CD8-positive, alpha-beta T cell (primary cell): ENCODE measurements at regions of chr1 and their contacts with region 1.

Region 1: GRCh38 chr1:1906185-1907097 is 8.6 kb upstream of the CALML6 start:
- DNase-seq: peak; percentile 39 to 80 (median 68)
- ATAC-seq: peak; percentile 21
- H3K4me3 ChIP-seq: no peak overlapping the region
- H3K4me3 Mint-ChIP-seq: peak overlapping the region; percentile 54
- H3K27ac ChIP-seq: no peak overlapping the region
- H3K27ac Mint-ChIP-seq: no peak overlapping the region
- H3K4me1 ChIP-seq: peaks cover 10% of the 10 kb centered on the region
- H3K4me1 Mint-ChIP-seq: peaks cover 11% of the 10 kb centered on the region
- H3K27me3 ChIP-seq: peaks cover 0 to 3% of the 10 kb centered on the region in 2 experiments
- H3K27me3 Mint-ChIP-seq: no peaks in the 10 kb centered on the region
- CTCF ChIP-seq: peak; percentile 86

Region 2: GRCh38 chr1:1630271-1630964 is 276.0 kb before region 1 on chr1:
- CTCF ChIA-PET with region 1: no interaction called
- POLR2A ChIA-PET with region 1: interaction called, 4 read pairs
- intact Hi-C with region 1: loop called in 1 of 2 experiments (anchors 5 kb)
- DNase-seq: peak; percentile 89 to 99 (median 93)
- ATAC-seq: peak; percentile 56
- H3K4me3 ChIP-seq: peak overlapping the region; percentile 45 to 53
- H3K4me3 Mint-ChIP-seq: peak overlapping the region; percentile 92
- H3K27ac ChIP-seq: peak overlapping the region; percentile 55 to 79
- H3K27ac Mint-ChIP-seq: peak overlapping the region; percentile 96
- H3K4me1 ChIP-seq: peaks cover 11% of the 10 kb centered on the region
- H3K4me1 Mint-ChIP-seq: peaks cover 10% of the 10 kb centered on the region
- H3K27me3 ChIP-seq: no peaks in the 10 kb centered on the region
- H3K27me3 Mint-ChIP-seq: no peaks in the 10 kb centered on the region
- CTCF ChIP-seq: no peak

Region 3: GRCh38 chr1:1788646-1789431 is 117.6 kb before region 1 on chr1:
- CTCF ChIA-PET with region 1: interaction called, 13 read pairs
- POLR2A ChIA-PET with region 1: no interaction called
- intact Hi-C with region 1: loop called in 1 of 2 experiments (anchors 1 kb)
- DNase-seq: peak in 1 of 9 experiments; percentile 34
- ATAC-seq: no peak
- H3K4me3 ChIP-seq: no peak overlapping the region
- H3K4me3 Mint-ChIP-seq: no peak overlapping the region
- H3K27ac ChIP-seq: no peak overlapping the region
- H3K27ac Mint-ChIP-seq: peak overlapping the region; percentile 55
- H3K4me1 ChIP-seq: no peaks in the 10 kb centered on the region
- H3K4me1 Mint-ChIP-seq: no peaks in the 10 kb centered on the region
- H3K27me3 ChIP-seq: no peaks in the 10 kb centered on the region
- H3K27me3 Mint-ChIP-seq: no peaks in the 10 kb centered on the region
- CTCF ChIP-seq: no peak

Region 4: GRCh38 chr1:1841575-1841995 is 64.9 kb before region 1 on chr1:
- CTCF ChIA-PET with region 1: interaction called, 4 read pairs
- POLR2A ChIA-PET with region 1: interaction called, 3 read pairs
- intact Hi-C with region 1: loop called in 1 of 2 experiments (anchors 5 kb)
- DNase-seq: no peak
- ATAC-seq: no peak
- H3K4me3 ChIP-seq: no peak overlapping the region
- H3K4me3 Mint-ChIP-seq: peak overlapping the region; percentile 59
- H3K27ac ChIP-seq: peak overlapping the region in 1 of 2 experiments; percentile 10
- H3K27ac Mint-ChIP-seq: peak overlapping the region; percentile 71
- H3K4me1 ChIP-seq: peaks cover 24% of the 10 kb centered on the region
- H3K4me1 Mint-ChIP-seq: peaks cover 54% of the 10 kb centered on the region
- H3K27me3 ChIP-seq: no peaks in the 10 kb centered on the region
- H3K27me3 Mint-ChIP-seq: no peaks in the 10 kb centered on the region
- CTCF ChIP-seq: no peak

Region 5: DNA sequence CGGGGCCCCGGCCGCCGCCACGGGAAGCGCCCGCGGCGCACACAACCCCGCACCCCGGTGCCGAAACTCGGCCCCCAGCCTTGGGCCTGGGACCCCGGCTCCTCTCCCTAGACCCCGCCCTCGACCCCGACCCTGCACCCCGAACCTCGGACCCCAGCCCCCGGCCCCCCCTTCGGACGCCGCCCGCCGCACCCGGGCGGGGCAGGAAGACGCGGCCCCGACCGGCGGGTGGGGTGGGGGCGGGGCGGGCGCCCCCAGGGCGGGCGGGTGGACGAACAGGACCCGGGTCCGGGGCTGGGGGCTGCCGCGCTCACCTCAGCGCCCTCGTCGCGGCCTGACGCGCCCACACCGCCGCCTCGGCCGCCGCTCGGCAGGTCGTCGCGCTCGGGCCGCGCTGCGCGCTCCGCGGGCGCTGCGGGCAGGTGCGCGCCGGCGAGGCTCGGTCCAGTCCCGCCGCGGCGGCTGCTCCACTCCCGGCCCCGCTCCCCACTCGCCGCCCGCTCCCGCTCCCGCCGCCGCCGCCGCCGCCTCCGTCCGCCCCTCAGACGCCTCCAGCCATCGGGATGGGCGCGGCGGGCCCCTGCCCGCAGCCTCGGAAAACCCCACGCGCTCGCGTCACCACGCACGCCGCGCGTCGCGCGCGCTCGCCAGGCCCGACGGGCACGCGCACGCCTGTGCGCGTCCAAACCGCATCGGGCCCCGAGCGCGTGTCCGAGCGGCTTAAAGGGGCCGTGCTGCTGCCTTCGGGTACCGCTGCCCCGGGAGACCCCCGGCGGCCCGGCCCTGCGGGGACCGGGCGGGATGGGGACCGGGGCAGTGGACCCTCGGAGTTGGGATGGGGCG is 15.7 kb before region 1 on chr1 and contains the start of gene GNB1:
- CTCF ChIA-PET with region 1: interaction called, 21 read pairs
- POLR2A ChIA-PET with region 1: interaction called, 11 read pairs
- intact Hi-C with region 1: loop called (anchors 1 kb)
- DNase-seq: peak; percentile 80 to 97 (median 87)
- ATAC-seq: peak; percentile 62
- H3K4me3 ChIP-seq: peak within 1 kb of the TSS; percentile 68 to 69
- H3K4me3 Mint-ChIP-seq: peak within 1 kb of the TSS; percentile 87
- H3K27ac ChIP-seq: peak within 1 kb of the TSS; percentile 70 to 89
- H3K27ac Mint-ChIP-seq: peak within 1 kb of the TSS; percentile 94
- H3K4me1 ChIP-seq: peaks cover 72% of the 10 kb centered on the region
- H3K4me1 Mint-ChIP-seq: peaks cover 60% of the 10 kb centered on the region
- H3K27me3 ChIP-seq: no peaks in the 10 kb centered on the region
- H3K27me3 Mint-ChIP-seq: no peaks in the 10 kb centered on the region
- CTCF ChIP-seq: no peak
- total RNA-seq, gene GNB1: 145 to 147 TPM